ENCODE measurements at regions of chr1 and their contacts with region 1.

Region 1: DNA sequence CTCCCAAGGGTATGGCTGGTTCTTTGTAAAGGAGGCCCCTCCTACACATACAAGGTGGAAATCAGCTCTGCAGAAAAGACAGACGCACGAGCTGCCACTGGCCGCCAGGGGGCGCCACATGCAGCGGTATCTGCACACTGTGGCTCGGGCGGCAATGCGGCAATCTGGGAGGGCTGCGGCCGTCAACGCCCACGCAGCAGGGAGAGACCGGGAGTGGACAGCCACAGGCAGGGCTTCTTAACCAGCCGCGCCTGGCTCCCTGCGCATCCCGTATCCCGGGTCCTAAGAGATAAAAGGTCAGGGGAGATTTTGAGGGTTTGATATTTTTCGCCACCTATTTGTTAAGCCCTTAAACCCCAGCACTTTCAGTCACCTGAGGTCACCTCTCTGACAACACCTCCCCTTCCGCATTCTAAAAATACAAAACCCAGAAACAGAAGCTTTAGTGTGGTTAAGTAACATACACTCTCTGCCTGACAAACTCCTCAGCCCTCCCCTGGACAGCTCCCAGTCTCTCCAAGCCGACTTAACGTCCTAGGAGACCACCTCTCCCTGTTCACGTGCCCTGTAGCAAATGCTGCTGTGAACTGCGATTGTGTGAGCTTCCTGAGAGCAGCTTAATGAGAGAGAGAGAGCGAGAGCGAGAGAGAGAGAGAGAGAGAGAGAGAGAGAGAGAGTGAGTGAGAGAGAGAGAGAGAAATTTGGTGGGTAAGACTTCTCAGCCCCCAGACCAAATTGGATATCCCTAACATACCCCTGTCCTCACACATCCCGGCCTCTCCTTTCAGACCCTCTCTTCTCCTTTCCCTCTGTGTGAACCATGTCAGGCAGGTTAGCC is 13.5 kb upstream of the KCNA2 start:
- DNase-seq: peak; percentile 83
- H3K4me3 Mint-ChIP-seq: peak overlapping the region; percentile 78
- H3K27ac Mint-ChIP-seq: peak overlapping the region; percentile 53
- H3K4me1 Mint-ChIP-seq: peaks cover 32% of the 10 kb centered on the region
- H3K27me3 Mint-ChIP-seq: peaks cover 18% of the 10 kb centered on the region

Region 2: DNA sequence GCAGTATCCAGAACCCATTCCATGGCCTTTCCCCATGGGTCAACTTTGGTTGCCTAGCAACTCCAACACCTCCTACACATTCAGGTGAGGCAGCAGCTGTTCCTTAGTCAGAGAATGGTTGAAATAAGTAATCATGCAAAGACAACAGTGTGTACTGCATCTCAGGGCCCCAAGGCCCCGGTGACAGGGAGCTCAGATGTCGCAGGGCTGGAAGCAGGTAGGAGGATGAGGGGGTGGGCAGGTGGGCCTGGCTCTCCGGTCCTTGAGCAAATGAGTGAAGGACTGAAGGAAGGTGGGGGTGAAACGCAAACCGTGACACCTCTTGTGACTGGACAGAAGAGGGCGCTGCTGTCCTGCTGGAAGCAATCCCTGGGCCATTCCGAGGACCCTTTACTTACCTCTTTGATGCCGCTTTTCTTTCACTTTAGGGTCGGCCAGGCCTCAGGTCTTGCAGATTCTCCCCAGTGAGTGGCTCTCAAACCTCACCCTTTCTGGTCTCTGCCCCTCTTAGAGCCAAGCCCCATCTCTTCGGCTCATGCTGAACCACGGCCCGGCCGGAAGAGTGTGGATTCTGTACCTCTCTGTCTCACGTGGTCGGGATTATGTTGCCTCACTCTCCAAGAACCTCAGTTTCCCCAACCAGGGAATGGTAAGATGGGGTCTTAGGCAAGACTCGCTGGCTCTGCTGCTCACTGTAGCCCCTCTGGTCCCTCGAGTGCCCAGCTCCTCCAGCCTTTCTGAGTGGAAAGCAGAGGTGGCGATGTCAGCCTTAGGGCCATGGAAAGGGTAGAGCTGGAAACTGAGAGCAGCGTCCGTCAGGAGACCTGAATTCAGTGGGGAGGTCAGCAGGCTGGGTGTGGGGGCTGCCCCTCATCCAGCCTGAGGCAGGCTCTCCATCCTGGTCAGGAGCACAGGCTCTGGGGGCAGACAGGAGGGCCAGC is 95.0 kb before region 1 on chr1:
- intact Hi-C with region 1: loop called (anchors 2 kb)
- DNase-seq: peak; percentile 31
- H3K4me3 Mint-ChIP-seq: no peak overlapping the region
- H3K27ac Mint-ChIP-seq: no peak overlapping the region
- H3K4me1 Mint-ChIP-seq: no peaks in the 10 kb centered on the region
- H3K27me3 Mint-ChIP-seq: peaks cover 26% of the 10 kb centered on the region

Region 3: GRCh38 chr1:110554871-110555801 is 64.5 kb before region 1 on chr1:
- intact Hi-C with region 1: loop called (anchors 5 kb)
- DNase-seq: peak; percentile 32
- H3K4me3 Mint-ChIP-seq: no peak overlapping the region
- H3K27ac Mint-ChIP-seq: no peak overlapping the region
- H3K4me1 Mint-ChIP-seq: peaks cover 2% of the 10 kb centered on the region
- H3K27me3 Mint-ChIP-seq: peaks cover 54% of the 10 kb centered on the region

Region 4: GRCh38 chr1:110581682-110582145 is 37.9 kb before region 1 on chr1:
- intact Hi-C with region 1: no loop called
- DNase-seq: no peak
- H3K4me3 Mint-ChIP-seq: no peak overlapping the region
- H3K27ac Mint-ChIP-seq: no peak overlapping the region
- H3K4me1 Mint-ChIP-seq: no peaks in the 10 kb centered on the region
- H3K27me3 Mint-ChIP-seq: peaks cover 20% of the 10 kb centered on the region

Region 5: GRCh38 chr1:110766025-110766647 is 146.5 kb after region 1 on chr1:
- intact Hi-C with region 1: loop called (anchors 1 kb)
- DNase-seq: peak; percentile 31
- H3K4me3 Mint-ChIP-seq: no peak overlapping the region
- H3K27ac Mint-ChIP-seq: no peak overlapping the region
- H3K4me1 Mint-ChIP-seq: peaks cover 6% of the 10 kb centered on the region
- H3K27me3 Mint-ChIP-seq: peaks cover 57% of the 10 kb centered on the region

Measured in activated T-helper 2 cell treated with anti-CD3 and anti-CD28 coated beads, Interferon-gamma antibody, Interleukin-2, Interleukin-4, amounts not matched to agents 10 μg/mL and 5 μg/mL and 100 μg/mL, durations not matched to agents 14 hours and 24 hours and 36 hours (primary cell).